ENCODE measurements at regions of chr12 and their contacts with region 1.

Region 1: DNA sequence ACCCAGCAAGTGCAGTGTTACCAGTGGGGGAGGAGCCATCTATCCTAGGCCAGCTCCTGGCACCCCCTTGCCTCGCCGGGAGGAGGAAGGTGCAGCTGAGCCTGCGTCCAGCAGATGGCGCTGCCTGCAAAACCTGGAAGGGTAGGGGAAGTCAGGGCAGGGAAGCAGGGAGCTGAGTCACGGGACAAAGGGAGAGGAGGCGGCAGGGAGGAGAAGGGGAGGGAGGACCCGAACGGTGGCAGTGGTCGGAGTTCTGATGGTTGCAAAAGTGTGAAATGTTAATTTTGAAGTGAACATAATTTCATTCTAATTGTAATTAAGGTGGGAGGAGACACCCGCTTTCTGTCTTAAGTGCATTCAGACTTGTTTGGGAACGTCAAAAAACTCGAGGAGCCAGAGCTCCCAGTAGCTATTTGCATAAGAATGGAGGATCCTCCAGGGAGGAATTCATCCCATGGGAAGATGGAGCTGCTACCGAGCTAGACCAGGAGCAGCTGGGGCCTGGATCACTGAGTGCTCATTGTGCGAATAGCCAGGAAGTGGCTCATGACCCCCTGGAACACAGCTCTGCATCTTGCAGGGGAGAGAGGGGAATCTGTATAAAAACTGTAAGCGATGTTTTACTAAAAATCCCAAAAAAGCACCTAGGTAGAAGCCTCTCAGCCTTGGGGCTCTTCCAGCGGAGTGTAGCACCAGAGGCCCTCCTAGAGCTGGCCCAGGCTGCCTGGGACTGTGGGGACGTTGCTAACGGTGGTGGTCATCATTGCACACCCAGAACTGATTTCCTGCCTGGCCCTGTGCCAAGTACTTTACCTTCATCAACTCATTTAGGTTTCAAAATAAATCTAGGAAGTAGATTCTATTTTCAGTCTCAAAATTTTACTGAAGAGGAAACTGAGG is 59.5 kb downstream of the EMP1 start:
- DNase-seq: peak; percentile 75
- ATAC-seq: peak; percentile 96
- H3K4me3 ChIP-seq: no peak overlapping the region
- H3K4me3 Mint-ChIP-seq: peak overlapping the region; percentile 33
- H3K27ac ChIP-seq: no peak overlapping the region
- H3K27ac Mint-ChIP-seq: no peak overlapping the region
- H3K4me1 ChIP-seq: peaks cover 3 to 4% of the 10 kb centered on the region in 2 donors
- H3K4me1 Mint-ChIP-seq: peaks cover 4% of the 10 kb centered on the region
- H3K27me3 ChIP-seq: peaks cover 0 to 3% (median 0%) of the 10 kb centered on the region in 4 experiments
- H3K27me3 Mint-ChIP-seq: peaks cover 14% of the 10 kb centered on the region
- CTCF ChIP-seq: peak; percentile 96

Region 2: DNA sequence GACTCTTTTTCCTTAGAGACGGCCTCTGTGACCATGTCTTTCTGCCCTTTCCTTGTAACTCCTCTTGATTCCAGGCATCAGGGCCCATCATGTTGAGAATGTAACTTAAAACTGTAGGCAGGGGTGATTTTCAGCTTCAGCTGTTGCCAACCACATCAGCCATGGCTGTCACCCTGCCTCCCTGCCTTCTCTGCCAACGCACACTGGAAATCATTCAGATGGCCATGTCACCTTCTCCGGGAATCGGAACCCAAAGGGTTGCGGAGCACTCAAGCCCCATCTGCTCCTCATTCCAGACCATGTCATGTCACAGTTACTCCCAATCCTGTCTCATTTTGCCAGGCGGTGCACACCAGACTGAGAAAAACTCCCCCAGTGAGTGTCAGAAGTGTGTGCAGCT is 12.5 kb after region 1 on chr12:
- CTCF ChIA-PET with region 1: interaction called, 12 read pairs
- POLR2A ChIA-PET with region 1: no interaction called
- intact Hi-C with region 1: no loop called
- DNase-seq: no peak
- ATAC-seq: no peak
- H3K4me3 ChIP-seq: no peak overlapping the region
- H3K4me3 Mint-ChIP-seq: no peak overlapping the region
- H3K27ac ChIP-seq: no peak overlapping the region
- H3K27ac Mint-ChIP-seq: no peak overlapping the region
- H3K4me1 ChIP-seq: no peaks in the 10 kb centered on the region
- H3K4me1 Mint-ChIP-seq: no peaks in the 10 kb centered on the region
- H3K27me3 ChIP-seq: no peaks in the 10 kb centered on the region
- H3K27me3 Mint-ChIP-seq: peaks cover 17% of the 10 kb centered on the region
- CTCF ChIP-seq: no peak

Region 3: DNA sequence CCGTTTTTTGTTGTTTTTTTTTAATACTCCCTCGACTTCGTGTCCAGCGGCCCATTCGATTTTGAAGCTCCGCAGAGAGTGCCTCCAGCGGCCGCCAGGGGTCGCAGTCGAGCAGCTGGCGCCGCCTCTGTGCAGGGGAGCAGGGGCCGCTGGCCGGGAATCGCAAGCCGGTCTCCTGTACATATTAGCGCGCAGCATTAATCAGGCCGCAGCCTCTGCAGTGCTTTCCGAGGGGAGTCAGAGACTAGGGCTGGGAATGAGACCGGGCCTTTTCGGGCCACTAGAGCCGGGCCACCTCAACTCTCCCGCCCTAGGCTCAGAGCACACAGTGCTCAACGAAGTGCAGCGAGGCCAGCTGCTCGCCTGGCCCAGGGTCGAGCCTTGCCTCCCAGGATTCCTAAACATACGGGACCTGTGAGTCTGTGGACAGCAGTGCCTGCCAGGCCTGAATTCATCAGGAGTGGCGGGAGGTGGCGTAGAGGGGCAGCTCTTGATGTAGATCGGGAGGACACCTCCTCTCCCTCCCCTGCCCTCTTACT is 22.3 kb after region 1 on chr12:
- CTCF ChIA-PET with region 1: interaction called, 13 read pairs
- POLR2A ChIA-PET with region 1: no interaction called
- intact Hi-C with region 1: no loop called
- DNase-seq: peak; percentile 65
- ATAC-seq: peak; percentile 60
- H3K4me3 ChIP-seq: no peak overlapping the region
- H3K4me3 Mint-ChIP-seq: no peak overlapping the region
- H3K27ac ChIP-seq: no peak overlapping the region
- H3K27ac Mint-ChIP-seq: no peak overlapping the region
- H3K4me1 ChIP-seq: peaks cover 4 to 5% of the 10 kb centered on the region in 2 donors
- H3K4me1 Mint-ChIP-seq: peaks cover 6% of the 10 kb centered on the region
- H3K27me3 ChIP-seq: peaks cover 0 to 38% (median 10%) of the 10 kb centered on the region in 4 experiments
- H3K27me3 Mint-ChIP-seq: peaks cover 42% of the 10 kb centered on the region
- CTCF ChIP-seq: peak; percentile 97

Region 4: DNA sequence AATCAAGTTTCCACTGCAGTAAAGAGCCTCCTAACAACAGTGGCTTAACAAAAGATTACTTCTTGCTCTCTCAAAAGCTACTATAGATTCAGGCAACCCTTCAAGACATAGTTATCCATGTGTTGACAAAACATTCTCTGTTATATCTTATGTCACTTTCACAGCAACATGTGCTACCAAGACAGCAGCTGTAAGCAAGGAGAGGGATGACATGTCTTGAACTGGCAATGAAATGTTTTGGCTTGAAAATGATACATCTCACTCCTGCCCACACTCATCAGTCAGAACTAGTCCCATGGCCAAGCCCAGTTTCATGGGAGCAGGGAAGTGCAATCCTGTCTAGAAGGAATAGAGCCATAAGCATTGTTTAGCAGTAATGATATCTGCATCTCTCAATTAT is 736.1 kb after region 1 on chr12:
- CTCF ChIA-PET with region 1: no interaction called
- POLR2A ChIA-PET with region 1: no interaction called
- intact Hi-C with region 1: no loop called
- DNase-seq: no peak
- ATAC-seq: no peak
- H3K4me3 ChIP-seq: no peak overlapping the region
- H3K4me3 Mint-ChIP-seq: no peak overlapping the region
- H3K27ac ChIP-seq: no peak overlapping the region
- H3K27ac Mint-ChIP-seq: no peak overlapping the region
- H3K4me1 ChIP-seq: no peaks in the 10 kb centered on the region
- H3K4me1 Mint-ChIP-seq: no peaks in the 10 kb centered on the region
- H3K27me3 ChIP-seq: no peaks in the 10 kb centered on the region
- H3K27me3 Mint-ChIP-seq: peaks cover 37% of the 10 kb centered on the region
- CTCF ChIP-seq: no peak